Naive thymus-derived CD4-positive, alpha-beta T cell (primary cell): ENCODE measurements at regions of chr5 and their contacts with region 1.

Region 1: DNA sequence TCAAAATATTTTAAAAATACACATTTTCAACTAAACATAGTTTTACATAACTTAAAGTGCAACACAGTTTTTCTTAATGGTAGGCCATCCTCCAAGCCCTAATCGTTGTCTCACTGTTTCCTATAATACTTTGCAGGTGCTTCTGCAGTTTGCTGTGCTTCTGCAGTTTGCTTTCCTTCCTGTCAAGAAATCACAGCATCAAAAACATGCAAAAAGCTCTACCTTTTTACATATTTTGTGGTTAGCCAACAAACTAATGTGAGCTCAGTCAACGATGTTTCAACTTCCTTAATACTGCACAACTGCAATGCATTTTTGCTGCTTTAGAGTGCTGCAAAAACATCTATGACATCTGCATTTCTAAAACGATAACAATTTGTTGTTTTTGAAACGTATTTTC is 25.2 kb downstream of the EMB start:
- DNase-seq: peak in 7 of 9 donors; percentile 57 to 85 (median 74)
- ATAC-seq: peak; percentile 86
- H3K4me3 ChIP-seq: no peak overlapping the region
- H3K4me3 Mint-ChIP-seq: peak overlapping the region in 7 of 10 donors; percentile 42 to 69 (median 60)
- H3K27ac ChIP-seq: peak overlapping the region; percentile 65
- H3K27ac Mint-ChIP-seq: peak overlapping the region in 8 of 9 donors; percentile 68 to 96 (median 93)
- H3K4me1 ChIP-seq: peaks cover 37 to 40% of the 10 kb centered on the region in 2 donors
- H3K4me1 Mint-ChIP-seq: peaks cover 49 to 97% (median 90%) of the 10 kb centered on the region in 7 donors
- H3K27me3 ChIP-seq: no peaks in the 10 kb centered on the region
- H3K27me3 Mint-ChIP-seq: no peaks in the 10 kb centered on the region

Region 2: GRCh38 chr5:50325237-50325832 is 90.6 kb before region 1 on chr5:
- CTCF ChIA-PET with region 1: interaction called, 3 read pairs
- POLR2A ChIA-PET with region 1: no interaction called
- intact Hi-C with region 1: loop called in 1 of 2 experiments (anchors 10 kb)
- DNase-seq: peak in 5 of 9 donors; percentile 2 to 33 (median 29)
- ATAC-seq: peak; percentile 42
- H3K4me3 ChIP-seq: no peak overlapping the region
- H3K4me3 Mint-ChIP-seq: no peak overlapping the region
- H3K27ac ChIP-seq: no peak overlapping the region
- H3K27ac Mint-ChIP-seq: no peak overlapping the region
- H3K4me1 ChIP-seq: peaks cover 0 to 9% of the 10 kb centered on the region in 2 donors
- H3K4me1 Mint-ChIP-seq: peaks cover 7 to 24% (median 16%) of the 10 kb centered on the region in 7 donors
- H3K27me3 ChIP-seq: no peaks in the 10 kb centered on the region
- H3K27me3 Mint-ChIP-seq: peaks cover 0 to 5% (median 0%) of the 10 kb centered on the region in 5 donors

Region 3: GRCh38 chr5:50336671-50337070 is 79.2 kb before region 1 on chr5:
- CTCF ChIA-PET with region 1: no interaction called
- POLR2A ChIA-PET with region 1: no interaction called
- intact Hi-C with region 1: no loop called
- DNase-seq: no peak
- ATAC-seq: no peak
- H3K4me3 ChIP-seq: no peak overlapping the region
- H3K4me3 Mint-ChIP-seq: no peak overlapping the region
- H3K27ac ChIP-seq: no peak overlapping the region
- H3K27ac Mint-ChIP-seq: no peak overlapping the region
- H3K4me1 ChIP-seq: no peaks in the 10 kb centered on the region
- H3K4me1 Mint-ChIP-seq: peaks cover 0 to 12% (median 4%) of the 10 kb centered on the region in 7 donors
- H3K27me3 ChIP-seq: no peaks in the 10 kb centered on the region
- H3K27me3 Mint-ChIP-seq: peaks cover 0 to 14% (median 0%) of the 10 kb centered on the region in 5 donors

Region 4: GRCh38 chr5:50365426-50366251 is 50.3 kb before region 1 on chr5:
- CTCF ChIA-PET with region 1: interaction called, 3 read pairs
- POLR2A ChIA-PET with region 1: no interaction called
- intact Hi-C with region 1: loop called in 1 of 2 experiments (anchors 5 kb)
- DNase-seq: no peak
- ATAC-seq: no peak
- H3K4me3 ChIP-seq: no peak overlapping the region
- H3K4me3 Mint-ChIP-seq: peak overlapping the region in 1 of 10 donors; percentile 10
- H3K27ac ChIP-seq: no peak overlapping the region
- H3K27ac Mint-ChIP-seq: peak overlapping the region in 8 of 9 donors; percentile 25 to 92 (median 68)
- H3K4me1 ChIP-seq: peaks cover 0 to 21% of the 10 kb centered on the region in 2 donors
- H3K4me1 Mint-ChIP-seq: peaks cover 12 to 49% (median 44%) of the 10 kb centered on the region in 7 donors
- H3K27me3 ChIP-seq: no peaks in the 10 kb centered on the region
- H3K27me3 Mint-ChIP-seq: no peaks in the 10 kb centered on the region

Region 5: GRCh38 chr5:50435168-50435567 is 19.3 kb after region 1 on chr5:
- CTCF ChIA-PET with region 1: no interaction called
- POLR2A ChIA-PET with region 1: interaction called, 6 read pairs
- intact Hi-C with region 1: loop called in 1 of 2 experiments (anchors 1 kb)
- DNase-seq: no peak
- ATAC-seq: peak; percentile 51
- H3K4me3 ChIP-seq: no peak overlapping the region
- H3K4me3 Mint-ChIP-seq: peak overlapping the region in 9 of 10 donors; percentile 9 to 99 (median 45)
- H3K27ac ChIP-seq: no peak overlapping the region
- H3K27ac Mint-ChIP-seq: peak overlapping the region in 7 of 9 donors; percentile 33 to 86 (median 60)
- H3K4me1 ChIP-seq: peaks cover 45 to 53% of the 10 kb centered on the region in 2 donors
- H3K4me1 Mint-ChIP-seq: peaks cover 48 to 99% (median 87%) of the 10 kb centered on the region in 7 donors
- H3K27me3 ChIP-seq: no peaks in the 10 kb centered on the region
- H3K27me3 Mint-ChIP-seq: no peaks in the 10 kb centered on the region

Region 6: GRCh38 chr5:50553560-50553984 is 137.7 kb after region 1 on chr5:
- CTCF ChIA-PET with region 1: no interaction called
- POLR2A ChIA-PET with region 1: no interaction called
- intact Hi-C with region 1: no loop called
- DNase-seq: peak in 1 of 9 donors; percentile 5
- ATAC-seq: no peak
- H3K4me3 ChIP-seq: peak overlapping the region; percentile 45
- H3K4me3 Mint-ChIP-seq: peak overlapping the region in 7 of 10 donors; percentile 20 to 69 (median 26)
- H3K27ac ChIP-seq: no peak overlapping the region
- H3K27ac Mint-ChIP-seq: peak overlapping the region in 4 of 9 donors; percentile 25 to 44 (median 32)
- H3K4me1 ChIP-seq: no peaks in the 10 kb centered on the region
- H3K4me1 Mint-ChIP-seq: peaks cover 6 to 55% (median 26%) of the 10 kb centered on the region in 7 donors
- H3K27me3 ChIP-seq: no peaks in the 10 kb centered on the region
- H3K27me3 Mint-ChIP-seq: peaks cover 0 to 6% (median 0%) of the 10 kb centered on the region in 5 donors